Activated CD4-positive, alpha-beta memory T cell treated with anti-CD3 and anti-CD28 coated beads, Interleukin-2, amount 10 ng/mL, durations not matched to agents 7 days and 5 days (primary cell): ENCODE measurements at regions of chr22 and their contacts with region 1.

Region 1: GRCh38 chr22:36323182-36323854 is 64.4 kb downstream of the MYH9 start:
- DNase-seq: no peak
- H3K4me3 Mint-ChIP-seq: no peak overlapping the region
- H3K27ac Mint-ChIP-seq: peak overlapping the region; percentile 64
- H3K4me1 Mint-ChIP-seq: peaks cover 26% of the 10 kb centered on the region
- H3K27me3 Mint-ChIP-seq: no peaks in the 10 kb centered on the region

Region 2: GRCh38 chr22:36048911-36049677 is 274.2 kb before region 1 on chr22:
- CTCF ChIA-PET with region 1: no interaction called
- POLR2A ChIA-PET with region 1: no interaction called
- DNase-seq: no peak
- H3K4me3 Mint-ChIP-seq: no peak overlapping the region
- H3K27ac Mint-ChIP-seq: no peak overlapping the region
- H3K4me1 Mint-ChIP-seq: peaks cover 8% of the 10 kb centered on the region
- H3K27me3 Mint-ChIP-seq: peaks cover 6% of the 10 kb centered on the region

Region 3: GRCh38 chr22:36339171-36340065 is 16.1 kb after region 1 on chr22:
- CTCF ChIA-PET with region 1: interaction called, 3 read pairs
- POLR2A ChIA-PET with region 1: interaction called, 13 read pairs
- DNase-seq: peak; percentile 45
- H3K4me3 Mint-ChIP-seq: no peak overlapping the region
- H3K27ac Mint-ChIP-seq: peak overlapping the region; percentile 69
- H3K4me1 Mint-ChIP-seq: peaks cover 96% of the 10 kb centered on the region
- H3K27me3 Mint-ChIP-seq: no peaks in the 10 kb centered on the region